Aorta (tissue), 5 donors: ENCODE measurements at regions of chr12 and their contacts with region 1.

Region 1: DNA sequence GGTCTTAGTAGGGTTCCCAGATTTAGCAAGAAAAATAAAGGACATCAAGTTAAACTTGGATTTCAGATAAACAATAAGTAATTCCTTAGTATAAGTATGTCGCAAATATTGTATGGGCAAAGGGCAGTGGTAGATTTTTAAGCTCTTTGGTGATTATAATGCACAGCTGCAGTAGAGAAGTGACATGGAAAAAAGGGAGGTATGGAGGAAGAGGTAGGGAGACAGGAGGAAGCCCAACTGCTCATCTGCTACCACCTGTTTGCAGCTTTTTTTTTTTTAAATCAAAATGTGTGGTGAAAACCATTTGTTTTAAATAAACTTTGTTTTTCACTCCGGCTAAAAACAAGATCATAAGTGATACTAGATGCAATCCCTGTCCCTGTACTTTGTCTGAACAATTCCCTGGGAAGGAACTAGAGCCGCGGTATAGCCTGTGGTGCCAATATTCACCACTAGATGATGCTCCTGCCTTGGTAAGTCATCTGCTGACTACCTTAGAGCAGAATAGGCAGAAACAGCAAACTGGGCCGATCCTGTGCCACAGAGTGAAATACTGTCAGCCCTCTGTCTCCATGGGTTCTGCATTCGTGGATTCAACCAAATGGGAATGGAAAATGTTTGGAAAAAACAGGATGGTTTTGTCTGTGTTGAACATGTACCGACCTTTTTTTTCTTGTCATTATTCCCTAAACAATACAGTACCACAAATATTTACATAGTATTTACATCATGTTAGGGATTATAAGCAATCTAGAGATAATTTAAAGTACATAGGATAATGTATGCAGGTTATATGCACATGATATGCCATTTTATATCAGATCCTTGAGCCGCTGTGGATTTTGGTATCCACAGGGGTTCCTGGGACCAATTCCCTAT is 62.4 kb upstream of the PLBD1 start:
- DNase-seq: peak; percentile 81 to 84
- ATAC-seq: peak; percentile 95
- H3K4me3 ChIP-seq: no peak overlapping the region
- H3K27ac ChIP-seq: no peak overlapping the region
- H3K4me1 ChIP-seq: no peaks in the 10 kb centered on the region
- H3K27me3 ChIP-seq: no peaks in the 10 kb centered on the region

Region 2: GRCh38 chr12:14537088-14537487 is 93.0 kb before region 1 on chr12:
- intact Hi-C with region 1: no loop called
- DNase-seq: no peak
- ATAC-seq: no peak
- H3K4me3 ChIP-seq: no peak overlapping the region
- H3K27ac ChIP-seq: no peak overlapping the region
- H3K4me1 ChIP-seq: no peaks in the 10 kb centered on the region
- H3K27me3 ChIP-seq: no peaks in the 10 kb centered on the region

Region 3: DNA sequence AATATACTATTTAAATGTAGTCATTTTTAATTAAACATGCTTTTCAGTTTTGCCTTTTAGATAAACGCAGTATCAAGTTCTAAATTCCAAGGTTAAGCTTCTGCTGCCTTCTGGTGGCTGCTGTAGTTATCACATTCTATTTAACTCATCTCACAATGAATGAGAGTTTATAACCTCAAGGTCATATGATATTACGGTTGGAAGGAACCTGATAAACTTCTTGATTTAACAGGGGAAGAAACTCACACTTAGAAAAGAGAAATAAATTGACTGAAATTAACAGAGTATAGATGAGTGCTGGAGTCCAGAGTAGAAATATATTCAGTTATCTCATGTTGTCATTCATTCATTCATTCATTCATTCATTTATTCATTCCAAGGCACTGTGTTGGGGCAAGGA is 34.4 kb after region 1 on chr12:
- intact Hi-C with region 1: loop called (anchors 1 to 2 kb)
- DNase-seq: no peak
- ATAC-seq: no peak
- H3K4me3 ChIP-seq: no peak overlapping the region
- H3K27ac ChIP-seq: no peak overlapping the region
- H3K4me1 ChIP-seq: no peaks in the 10 kb centered on the region
- H3K27me3 ChIP-seq: no peaks in the 10 kb centered on the region

Region 4: DNA sequence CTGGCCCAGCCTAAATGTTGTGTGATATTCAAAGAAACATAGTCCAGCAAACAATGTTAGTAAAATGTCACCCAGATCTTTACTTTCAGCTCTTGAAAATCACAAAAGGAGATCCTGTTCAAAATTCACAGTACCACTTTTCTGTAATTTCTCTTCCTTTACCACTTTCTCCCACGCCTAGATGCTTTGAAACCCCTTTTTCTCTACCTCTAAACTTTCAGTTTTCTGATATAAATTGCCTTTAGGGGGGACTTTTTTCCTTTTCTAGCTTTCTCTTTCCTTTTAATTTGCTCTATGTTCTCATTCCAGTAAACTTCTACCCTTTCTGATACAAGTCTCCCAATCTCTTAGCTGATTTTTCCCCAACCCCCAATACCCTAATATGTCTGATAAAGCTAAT is 1874.1 kb after region 1 on chr12:
- intact Hi-C with region 1: no loop called
- DNase-seq: no peak
- ATAC-seq: no peak
- H3K4me3 ChIP-seq: no peak overlapping the region
- H3K27ac ChIP-seq: no peak overlapping the region
- H3K4me1 ChIP-seq: no peaks in the 10 kb centered on the region
- H3K27me3 ChIP-seq: peaks cover 0 to 1% of the 10 kb centered on the region in 2 donors